Ovary (tissue), 10 donors: ENCODE measurements at regions of chr18 and their contacts with region 1.

Region 1: GRCh38 chr18:7926526-7926925 is 359.4 kb downstream of the PTPRM start:
- DNase-seq: no peak
- H3K4me3 ChIP-seq: no peak overlapping the region
- H3K27ac ChIP-seq: no peak overlapping the region
- H3K4me1 ChIP-seq: peaks cover 2% of the 10 kb centered on the region
- H3K27me3 ChIP-seq: no peaks in the 10 kb centered on the region
- CTCF ChIP-seq: no peak
- EP300 ChIP-seq: no peak
- POLR2A ChIP-seq: no peak

Region 2: GRCh38 chr18:6638447-6638846 is 1288.1 kb before region 1 on chr18:
- intact Hi-C with region 1: loop called in 1 of 4 experiments (anchors 5 kb)
- DNase-seq: no peak
- H3K4me3 ChIP-seq: no peak overlapping the region
- H3K27ac ChIP-seq: no peak overlapping the region
- H3K4me1 ChIP-seq: no peaks in the 10 kb centered on the region
- H3K27me3 ChIP-seq: no peaks in the 10 kb centered on the region
- CTCF ChIP-seq: no peak
- EP300 ChIP-seq: no peak
- POLR2A ChIP-seq: no peak

Region 3: DNA sequence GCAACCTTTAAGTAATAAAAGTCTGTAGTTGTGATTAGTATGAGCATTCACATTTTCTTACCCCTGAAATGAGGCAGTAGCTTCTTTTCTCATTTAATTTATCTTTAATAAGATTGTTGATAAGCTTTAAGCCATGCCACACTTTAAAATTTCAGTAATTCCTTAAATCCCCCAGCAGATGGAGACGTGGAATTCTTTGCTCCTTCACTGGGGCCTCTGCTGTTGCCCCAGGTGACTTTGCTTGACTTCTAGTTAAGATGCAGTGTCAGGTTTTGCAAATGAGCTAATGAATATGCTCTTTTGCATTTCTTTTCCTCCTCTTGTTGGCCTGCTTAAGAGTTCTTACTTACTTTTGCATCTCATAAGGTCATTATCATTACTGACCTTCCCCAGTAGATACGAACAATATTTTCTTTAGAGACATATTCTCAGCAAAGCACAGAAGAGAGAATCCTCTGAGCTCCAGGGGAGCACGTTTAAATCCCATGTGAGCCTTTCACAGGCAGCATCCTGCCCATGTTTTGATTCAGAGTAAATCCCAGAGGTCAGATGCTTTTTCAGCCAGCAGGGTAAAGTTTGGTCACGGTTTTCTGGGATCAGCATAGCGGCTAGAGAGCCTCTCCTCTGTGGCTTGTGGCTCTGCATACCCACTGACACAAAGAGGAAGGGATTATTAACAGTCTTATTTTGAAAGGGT is 136.5 kb before region 1 on chr18:
- intact Hi-C with region 1: no loop called
- DNase-seq: no peak
- H3K4me3 ChIP-seq: no peak overlapping the region
- H3K27ac ChIP-seq: no peak overlapping the region
- H3K4me1 ChIP-seq: no peaks in the 10 kb centered on the region
- H3K27me3 ChIP-seq: no peaks in the 10 kb centered on the region
- CTCF ChIP-seq: no peak
- EP300 ChIP-seq: no peak
- POLR2A ChIP-seq: no peak

Region 4: GRCh38 chr18:7830468-7830867 is 96.1 kb before region 1 on chr18:
- intact Hi-C with region 1: no loop called
- DNase-seq: no peak
- H3K4me3 ChIP-seq: no peak overlapping the region
- H3K27ac ChIP-seq: no peak overlapping the region
- H3K4me1 ChIP-seq: no peaks in the 10 kb centered on the region
- H3K27me3 ChIP-seq: no peaks in the 10 kb centered on the region
- CTCF ChIP-seq: no peak
- EP300 ChIP-seq: no peak
- POLR2A ChIP-seq: no peak

Region 5: GRCh38 chr18:8081872-8082553 is 155.5 kb after region 1 on chr18:
- intact Hi-C with region 1: no loop called
- DNase-seq: no peak
- H3K4me3 ChIP-seq: no peak overlapping the region
- H3K27ac ChIP-seq: no peak overlapping the region
- H3K4me1 ChIP-seq: no peaks in the 10 kb centered on the region
- H3K27me3 ChIP-seq: no peaks in the 10 kb centered on the region
- CTCF ChIP-seq: no peak
- EP300 ChIP-seq: no peak
- POLR2A ChIP-seq: no peak

Region 6: GRCh38 chr18:8095947-8096570 is 169.5 kb after region 1 on chr18:
- intact Hi-C with region 1: no loop called
- DNase-seq: no peak
- H3K4me3 ChIP-seq: no peak overlapping the region
- H3K27ac ChIP-seq: no peak overlapping the region
- H3K4me1 ChIP-seq: peaks cover 4% of the 10 kb centered on the region
- H3K27me3 ChIP-seq: no peaks in the 10 kb centered on the region
- CTCF ChIP-seq: no peak
- EP300 ChIP-seq: no peak
- POLR2A ChIP-seq: no peak